ENCODE measurements at regions of chr5 and their contacts with region 1.

Region 1: GRCh38 chr5:148820461-148821395 is 5.7 kb upstream of the ADRB2 start:
- DNase-seq: peak in 3 of 9 experiments; percentile 16 to 71 (median 63)
- ATAC-seq: no peak
- H3K4me3 ChIP-seq: no peak overlapping the region
- H3K4me3 Mint-ChIP-seq: no peak overlapping the region
- H3K27ac ChIP-seq: no peak overlapping the region
- H3K27ac Mint-ChIP-seq: no peak overlapping the region
- H3K4me1 ChIP-seq: peaks cover 4% of the 10 kb centered on the region
- H3K4me1 Mint-ChIP-seq: peaks cover 7% of the 10 kb centered on the region
- H3K27me3 ChIP-seq: no peaks in the 10 kb centered on the region
- H3K27me3 Mint-ChIP-seq: no peaks in the 10 kb centered on the region
- CTCF ChIP-seq: peak; percentile 44

Region 2: DNA sequence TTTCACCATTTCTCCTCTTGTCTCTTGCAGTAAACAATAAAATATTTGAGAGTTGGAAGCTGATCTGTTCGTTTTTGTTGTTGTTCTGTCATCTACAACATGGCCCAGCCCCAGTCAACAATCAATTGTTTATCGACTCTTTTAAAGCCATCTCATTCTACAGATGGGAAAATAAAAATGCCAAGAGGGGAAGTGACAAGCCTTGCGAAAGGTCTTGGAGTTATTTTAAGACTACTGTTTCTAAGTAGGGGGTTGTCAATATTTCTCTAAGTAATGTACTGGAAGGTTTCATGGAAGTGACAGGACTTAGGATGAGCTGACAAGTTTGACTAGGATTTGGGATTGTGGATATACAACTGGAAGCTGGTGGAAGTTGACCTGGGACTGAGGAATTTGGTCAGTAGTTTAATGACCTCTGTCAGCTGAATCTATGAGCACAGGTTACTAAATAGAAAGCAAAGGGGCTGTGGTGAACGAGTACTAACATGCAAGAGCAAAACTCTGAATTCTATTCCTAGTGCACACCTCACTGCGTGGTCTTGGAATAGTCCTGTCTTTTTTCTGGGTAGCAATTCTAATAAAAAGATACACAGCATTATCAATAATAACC is 51.8 kb before region 1 on chr5:
- CTCF ChIA-PET with region 1: no interaction called
- POLR2A ChIA-PET with region 1: no interaction called
- intact Hi-C with region 1: no loop called
- DNase-seq: no peak
- ATAC-seq: no peak
- H3K4me3 ChIP-seq: no peak overlapping the region
- H3K4me3 Mint-ChIP-seq: no peak overlapping the region
- H3K27ac ChIP-seq: no peak overlapping the region
- H3K27ac Mint-ChIP-seq: no peak overlapping the region
- H3K4me1 ChIP-seq: no peaks in the 10 kb centered on the region
- H3K4me1 Mint-ChIP-seq: no peaks in the 10 kb centered on the region
- H3K27me3 ChIP-seq: peaks cover 0 to 2% of the 10 kb centered on the region in 2 experiments
- H3K27me3 Mint-ChIP-seq: peaks cover 19% of the 10 kb centered on the region
- CTCF ChIP-seq: no peak

Region 3: GRCh38 chr5:148805326-148806290 is 15.1 kb before region 1 on chr5:
- CTCF ChIA-PET with region 1: interaction called, 22 read pairs
- POLR2A ChIA-PET with region 1: interaction called, 5 read pairs
- intact Hi-C with region 1: no loop called
- DNase-seq: no peak
- ATAC-seq: no peak
- H3K4me3 ChIP-seq: no peak overlapping the region
- H3K4me3 Mint-ChIP-seq: no peak overlapping the region
- H3K27ac ChIP-seq: no peak overlapping the region
- H3K27ac Mint-ChIP-seq: no peak overlapping the region
- H3K4me1 ChIP-seq: peaks cover 16% of the 10 kb centered on the region
- H3K4me1 Mint-ChIP-seq: peaks cover 25% of the 10 kb centered on the region
- H3K27me3 ChIP-seq: no peaks in the 10 kb centered on the region
- H3K27me3 Mint-ChIP-seq: peaks cover 2% of the 10 kb centered on the region
- CTCF ChIP-seq: no peak

Region 4: GRCh38 chr5:148849461-148849860 is 28.7 kb after region 1 on chr5:
- CTCF ChIA-PET with region 1: interaction called, 13 read pairs
- POLR2A ChIA-PET with region 1: interaction called, 8 read pairs
- intact Hi-C with region 1: no loop called
- DNase-seq: peak in 6 of 9 experiments; percentile 13 to 86 (median 64)
- ATAC-seq: peak; percentile 58
- H3K4me3 ChIP-seq: peak overlapping the region in 1 of 2 experiments; percentile 11
- H3K4me3 Mint-ChIP-seq: peak overlapping the region; percentile 5
- H3K27ac ChIP-seq: peak overlapping the region; percentile 42 to 91
- H3K27ac Mint-ChIP-seq: peak overlapping the region; percentile 89
- H3K4me1 ChIP-seq: peaks cover 52% of the 10 kb centered on the region
- H3K4me1 Mint-ChIP-seq: peaks cover 71% of the 10 kb centered on the region
- H3K27me3 ChIP-seq: no peaks in the 10 kb centered on the region
- H3K27me3 Mint-ChIP-seq: no peaks in the 10 kb centered on the region
- CTCF ChIP-seq: no peak

Region 5: DNA sequence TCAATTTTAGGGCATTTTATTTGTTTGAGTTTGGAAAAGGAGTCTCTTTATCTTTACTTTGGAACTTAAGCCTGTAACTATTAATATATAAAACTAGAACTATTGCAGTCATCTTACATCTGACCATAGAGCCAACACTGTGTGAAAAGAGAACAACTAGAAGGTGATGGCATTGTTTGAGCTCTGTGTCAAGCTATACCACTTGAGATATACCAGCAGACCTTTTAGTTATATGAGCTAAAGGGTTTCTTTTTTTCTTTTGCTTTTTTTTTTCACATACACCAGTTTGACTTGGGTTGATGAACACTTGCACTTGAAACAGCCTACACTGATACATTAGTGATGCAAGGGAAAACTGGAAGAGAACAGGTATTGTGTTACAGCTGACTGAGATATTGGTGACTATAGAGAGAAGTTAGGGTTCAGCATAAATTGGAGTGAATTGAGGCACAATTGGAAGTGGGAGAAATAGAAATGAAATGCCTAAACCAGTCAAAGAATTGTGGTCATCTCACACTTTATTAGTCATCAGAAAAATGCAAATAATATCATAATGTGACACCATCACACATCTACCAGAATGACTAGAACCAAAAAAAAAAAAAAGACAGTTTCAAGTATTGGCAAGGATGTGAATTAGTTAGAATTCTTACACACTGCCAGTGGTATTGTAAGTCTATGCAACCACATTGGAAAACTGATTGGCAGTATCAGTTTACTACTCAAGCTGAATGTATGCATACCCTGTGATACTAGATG is 66.6 kb after region 1 on chr5:
- CTCF ChIA-PET with region 1: no interaction called
- POLR2A ChIA-PET with region 1: no interaction called
- intact Hi-C with region 1: no loop called
- DNase-seq: peak in 1 of 9 experiments; percentile 21
- ATAC-seq: no peak
- H3K4me3 ChIP-seq: no peak overlapping the region
- H3K4me3 Mint-ChIP-seq: no peak overlapping the region
- H3K27ac ChIP-seq: no peak overlapping the region
- H3K27ac Mint-ChIP-seq: no peak overlapping the region
- H3K4me1 ChIP-seq: no peaks in the 10 kb centered on the region
- H3K4me1 Mint-ChIP-seq: no peaks in the 10 kb centered on the region
- H3K27me3 ChIP-seq: no peaks in the 10 kb centered on the region
- H3K27me3 Mint-ChIP-seq: peaks cover 15% of the 10 kb centered on the region
- CTCF ChIP-seq: no peak

Region 6: DNA sequence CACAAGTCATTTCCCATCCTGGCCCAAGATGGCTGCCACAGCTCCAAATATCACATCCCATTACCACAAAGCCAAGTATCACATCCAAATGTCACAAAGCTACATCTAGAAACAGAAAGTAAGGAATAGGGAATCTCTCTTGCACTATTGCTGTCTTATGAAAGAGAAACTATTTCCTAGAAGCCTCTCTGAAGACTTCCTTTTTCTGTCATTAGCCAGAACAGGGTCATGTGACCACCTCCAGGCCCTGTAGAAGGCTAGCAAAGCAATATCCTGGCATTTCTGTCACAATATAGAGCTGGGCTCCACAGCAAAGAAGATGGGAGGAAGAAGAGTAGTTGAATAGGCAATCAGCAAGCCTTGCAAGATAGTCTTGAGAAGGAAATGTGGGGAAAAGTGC is 142.9 kb after region 1 on chr5:
- CTCF ChIA-PET with region 1: interaction called, 54 read pairs
- POLR2A ChIA-PET with region 1: no interaction called
- intact Hi-C with region 1: loop called in 1 of 2 experiments (anchors 5 kb)
- DNase-seq: no peak
- ATAC-seq: no peak
- H3K4me3 ChIP-seq: no peak overlapping the region
- H3K4me3 Mint-ChIP-seq: no peak overlapping the region
- H3K27ac ChIP-seq: no peak overlapping the region
- H3K27ac Mint-ChIP-seq: no peak overlapping the region
- H3K4me1 ChIP-seq: no peaks in the 10 kb centered on the region
- H3K4me1 Mint-ChIP-seq: peaks cover 1% of the 10 kb centered on the region
- H3K27me3 ChIP-seq: no peaks in the 10 kb centered on the region
- H3K27me3 Mint-ChIP-seq: peaks cover 3% of the 10 kb centered on the region
- CTCF ChIP-seq: no peak

Region 7: GRCh38 chr5:149035372-149035790 is 214.7 kb after region 1 on chr5:
- CTCF ChIA-PET with region 1: interaction called, 4 read pairs
- POLR2A ChIA-PET with region 1: no interaction called
- intact Hi-C with region 1: loop called in 1 of 2 experiments (anchors 2 kb)
- DNase-seq: peak; percentile 51 to 80 (median 67)
- ATAC-seq: peak; percentile 52
- H3K4me3 ChIP-seq: no peak overlapping the region
- H3K4me3 Mint-ChIP-seq: no peak overlapping the region
- H3K27ac ChIP-seq: no peak overlapping the region
- H3K27ac Mint-ChIP-seq: no peak overlapping the region
- H3K4me1 ChIP-seq: no peaks in the 10 kb centered on the region
- H3K4me1 Mint-ChIP-seq: peaks cover 15% of the 10 kb centered on the region
- H3K27me3 ChIP-seq: no peaks in the 10 kb centered on the region
- H3K27me3 Mint-ChIP-seq: peaks cover 6% of the 10 kb centered on the region
- CTCF ChIP-seq: peak; percentile 70